SK-N-SH (cell line): ENCODE measurements at regions of chr19 and their contacts with region 1.

Region 1: DNA sequence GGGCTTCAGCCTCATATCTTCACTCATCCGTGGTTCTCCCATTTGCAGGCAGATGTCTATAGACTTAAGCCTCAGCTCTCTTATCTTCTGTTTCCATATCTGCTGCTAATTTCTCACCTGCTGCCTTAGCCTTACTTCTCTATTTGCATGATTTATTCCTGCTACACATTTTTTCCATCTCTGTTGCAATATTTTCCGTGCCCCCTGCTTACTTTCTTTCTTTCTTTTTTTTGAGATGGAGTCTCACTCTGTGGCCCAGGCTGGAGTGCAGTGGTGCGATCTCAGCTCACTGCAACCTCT is 5.7 kb downstream of the GYS1 start:
- DNase-seq: no peak
- H3K4me3 ChIP-seq: no peak overlapping the region
- H3K27ac ChIP-seq: no peak overlapping the region
- H3K4me1 ChIP-seq: peaks cover 0 to 7% of the 10 kb centered on the region in 2 experiments; a peak in 1 of 4 replicates
- H3K27me3 ChIP-seq: no peaks in the 10 kb centered on the region
- CTCF ChIP-seq: no peak
- EP300 ChIP-seq: no peak
- RAD21 ChIP-seq: no peak

Region 2: DNA sequence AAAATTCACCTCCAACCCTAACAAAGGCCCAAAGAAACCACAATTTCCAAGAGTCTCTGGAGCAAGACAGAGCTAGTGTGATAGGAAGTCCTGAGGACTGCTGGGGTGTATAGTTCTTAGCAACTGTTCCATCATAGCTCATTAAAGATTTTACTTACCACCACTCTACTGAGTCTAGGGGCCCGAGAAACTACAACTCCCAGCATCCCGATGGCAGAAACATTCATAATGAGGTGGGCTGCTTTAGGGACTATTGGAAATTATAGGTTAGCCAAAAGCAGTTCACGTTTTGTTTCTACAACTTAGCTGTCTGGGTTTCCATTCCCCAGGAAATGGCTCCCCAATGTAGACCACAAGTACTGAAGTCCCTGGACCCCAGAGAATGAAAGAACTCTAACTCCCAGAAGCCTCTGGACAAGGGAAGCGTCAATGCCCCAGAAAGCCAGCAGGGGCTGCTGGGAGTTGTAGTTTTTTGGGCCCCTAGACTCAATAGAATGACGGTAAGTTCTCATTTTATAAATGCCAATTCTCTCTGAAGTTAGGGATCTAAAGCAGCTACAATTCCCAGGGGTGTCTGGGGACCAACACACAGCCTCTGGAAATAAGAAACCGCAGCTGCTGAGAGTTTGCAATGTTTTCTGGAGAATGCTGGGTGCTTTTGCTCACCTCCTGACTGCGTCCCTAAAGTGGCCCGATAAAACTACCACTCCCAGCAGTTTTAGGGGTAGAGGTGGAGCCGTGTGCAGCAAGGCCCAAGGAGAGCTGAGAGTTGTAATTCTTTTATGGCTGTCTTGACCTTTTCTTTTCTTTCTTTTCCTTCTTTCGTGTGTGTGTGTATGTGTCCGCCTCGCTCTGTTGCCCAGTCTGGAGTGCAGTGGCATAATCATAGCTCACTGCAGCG is 11.2 kb before region 1 on chr19:
- CTCF ChIA-PET with region 1: interaction called, 54 read pairs
- POLR2A ChIA-PET with region 1: interaction called, 3 read pairs
- DNase-seq: peak; percentile 72
- H3K4me3 ChIP-seq: no peak overlapping the region
- H3K27ac ChIP-seq: no peak overlapping the region
- H3K4me1 ChIP-seq: no peaks in the 10 kb centered on the region
- H3K27me3 ChIP-seq: no peaks in the 10 kb centered on the region
- CTCF ChIP-seq: no peak
- EP300 ChIP-seq: no peak
- RAD21 ChIP-seq: no peak